Endothelial cell of umbilical vein (primary cell): ENCODE measurements at regions of chrX and their contacts with region 1.

Region 1: DNA sequence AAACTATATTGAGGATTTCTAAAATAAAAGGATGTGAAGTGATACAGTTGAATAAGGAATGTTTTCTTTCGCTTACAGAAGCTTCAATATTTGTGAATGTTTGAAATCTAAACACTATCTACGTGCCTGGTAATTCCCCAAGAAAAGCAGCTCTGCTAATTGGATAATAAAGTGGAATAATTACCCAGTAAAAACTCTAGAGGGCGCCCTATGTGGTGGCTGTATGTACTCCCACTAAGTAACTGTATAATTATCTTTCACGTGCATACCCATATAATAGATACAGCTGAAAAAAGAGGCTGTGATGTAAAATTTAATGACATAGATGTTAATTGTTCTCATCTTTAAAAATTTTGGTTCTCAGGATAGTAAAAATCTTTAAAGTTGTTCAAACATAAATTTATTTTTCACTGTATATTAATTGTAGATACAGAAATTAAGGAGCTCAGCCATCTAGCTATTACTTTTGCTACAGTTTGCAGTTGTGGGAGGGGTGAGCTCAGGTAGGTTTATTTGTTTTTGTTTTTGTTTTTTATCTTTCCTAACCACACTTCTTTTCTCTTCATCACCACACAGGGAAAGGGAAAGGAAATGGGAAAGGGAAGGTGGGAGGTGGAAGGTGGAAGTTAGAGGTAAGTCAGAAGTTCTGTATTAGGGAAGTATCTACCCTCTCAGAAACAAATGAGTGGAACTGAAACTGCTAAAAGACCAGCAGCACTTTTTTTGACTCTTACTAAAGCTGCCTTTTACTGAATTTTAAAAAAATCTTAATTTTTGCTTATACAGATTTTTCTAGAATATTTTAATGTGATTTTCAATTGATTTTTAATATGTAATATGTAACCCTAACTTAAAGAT is 151.7 kb upstream of the RPS6KA6 start:
- DNase-seq: peak; percentile 41
- H3K4me3 ChIP-seq: no peak overlapping the region
- H3K27ac ChIP-seq: no peak overlapping the region
- H3K4me1 ChIP-seq: no peaks in the 10 kb centered on the region
- H3K27me3 ChIP-seq: no peaks in the 10 kb centered on the region
- CTCF ChIP-seq: peak; percentile 25 to 43
- POLR2A ChIP-seq: no peak

Region 2: GRCh38 chrX:84358271-84358670 is 18.5 kb after region 1 on chrX:
- CTCF ChIA-PET with region 1: interaction called, 16 read pairs
- POLR2A ChIA-PET with region 1: no interaction called
- dilution Hi-C with region 1: no loop called
- intact Hi-C with region 1: no loop called
- DNase-seq: no peak
- H3K4me3 ChIP-seq: no peak overlapping the region
- H3K27ac ChIP-seq: no peak overlapping the region
- H3K4me1 ChIP-seq: peaks cover 2% of the 10 kb centered on the region
- H3K27me3 ChIP-seq: no peaks in the 10 kb centered on the region
- CTCF ChIP-seq: no peak
- POLR2A ChIP-seq: no peak

Region 3: GRCh38 chrX:84501798-84502628 is 162.3 kb after region 1 on chrX and contains the start of gene HDX:
- CTCF ChIA-PET with region 1: interaction called, 3 read pairs
- POLR2A ChIA-PET with region 1: no interaction called
- dilution Hi-C with region 1: no loop called
- intact Hi-C with region 1: loop called (anchors 10 kb)
- DNase-seq: peak; percentile 87
- H3K4me3 ChIP-seq: peak within 1 kb of the TSS; percentile 83 to 93 (median 92)
- H3K27ac ChIP-seq: peak within 1 kb of the TSS; percentile 96
- H3K4me1 ChIP-seq: peaks cover 2% of the 10 kb centered on the region
- H3K27me3 ChIP-seq: no peaks in the 10 kb centered on the region
- CTCF ChIP-seq: no peak
- POLR2A ChIP-seq: no peak
- total RNA-seq, gene HDX: 6.1 and 8.2 TPM in 2 replicates

Region 4: DNA sequence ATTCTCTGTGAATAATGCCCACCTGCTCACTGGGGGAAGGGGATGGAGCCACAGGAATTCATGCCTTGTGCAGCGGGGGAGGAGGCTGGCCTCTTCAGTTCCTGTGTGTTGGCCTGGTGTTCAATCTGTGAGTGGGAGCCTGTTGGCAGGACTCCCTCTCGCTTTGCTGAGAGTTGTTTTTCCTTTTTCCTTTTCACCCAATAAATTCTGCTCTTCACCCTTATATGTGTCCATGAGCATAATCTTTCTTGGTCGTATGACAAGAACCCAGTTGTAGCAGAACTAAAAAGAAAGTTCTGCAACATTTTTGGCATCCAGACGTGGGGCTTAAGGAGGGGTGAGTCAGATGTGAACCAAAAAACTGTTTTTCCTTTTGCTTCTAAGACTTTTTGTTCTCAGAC is 397.7 kb after region 1 on chrX:
- CTCF ChIA-PET with region 1: no interaction called
- POLR2A ChIA-PET with region 1: no interaction called
- dilution Hi-C with region 1: no loop called
- intact Hi-C with region 1: no loop called
- DNase-seq: no peak
- H3K4me3 ChIP-seq: no peak overlapping the region
- H3K27ac ChIP-seq: no peak overlapping the region
- H3K4me1 ChIP-seq: no peaks in the 10 kb centered on the region
- H3K27me3 ChIP-seq: no peaks in the 10 kb centered on the region
- CTCF ChIP-seq: no peak
- POLR2A ChIP-seq: no peak